MCF 10A (cell line): ENCODE measurements at regions of chr19 and their contacts with region 1.

Region 1: GRCh38 chr19:33998739-33999345 is 173.5 kb upstream of the LSM14A start:
- DNase-seq: peak; percentile 5
- H3K4me3 Mint-ChIP-seq: no peak overlapping the region
- H3K27ac Mint-ChIP-seq: no peak overlapping the region
- H3K4me1 Mint-ChIP-seq: no peaks in the 10 kb centered on the region
- H3K27me3 Mint-ChIP-seq: peaks cover 19% of the 10 kb centered on the region
- CTCF ChIP-seq: peak; percentile 28

Region 2: GRCh38 chr19:33795370-33796163 is 203.3 kb before region 1 on chr19:
- CTCF ChIA-PET with region 1: interaction called, 54 read pairs
- POLR2A ChIA-PET with region 1: interaction called, 7 read pairs
- intact Hi-C with region 1: no loop called
- DNase-seq: peak; percentile 89
- H3K4me3 Mint-ChIP-seq: peak overlapping the region; percentile 77
- H3K27ac Mint-ChIP-seq: peak overlapping the region; percentile 75
- H3K4me1 Mint-ChIP-seq: no peaks in the 10 kb centered on the region
- H3K27me3 Mint-ChIP-seq: no peaks in the 10 kb centered on the region
- CTCF ChIP-seq: peak; percentile 91

Region 3: DNA sequence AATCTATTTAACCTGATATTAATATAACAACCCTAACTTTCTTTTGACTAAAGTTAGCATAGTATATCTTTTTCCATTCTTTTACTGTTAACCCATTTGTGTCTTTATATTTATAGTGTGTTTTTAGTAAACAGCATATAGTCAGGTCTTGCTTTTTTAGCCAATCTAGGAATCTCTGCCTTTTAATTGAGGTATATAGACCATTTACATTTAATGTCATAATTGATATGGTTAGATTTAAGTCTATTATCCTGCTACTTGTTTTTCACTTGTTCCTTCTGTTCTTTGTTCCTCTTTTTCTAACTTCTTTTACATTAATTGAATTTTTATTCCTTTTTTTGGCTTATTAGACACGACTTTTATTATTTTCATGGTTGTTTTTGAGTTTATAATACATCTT is 27.8 kb before region 1 on chr19:
- CTCF ChIA-PET with region 1: interaction called, 12 read pairs
- POLR2A ChIA-PET with region 1: no interaction called
- intact Hi-C with region 1: no loop called
- DNase-seq: no peak
- H3K4me3 Mint-ChIP-seq: no peak overlapping the region
- H3K27ac Mint-ChIP-seq: no peak overlapping the region
- H3K4me1 Mint-ChIP-seq: no peaks in the 10 kb centered on the region
- H3K27me3 Mint-ChIP-seq: no peaks in the 10 kb centered on the region
- CTCF ChIP-seq: no peak

Region 4: DNA sequence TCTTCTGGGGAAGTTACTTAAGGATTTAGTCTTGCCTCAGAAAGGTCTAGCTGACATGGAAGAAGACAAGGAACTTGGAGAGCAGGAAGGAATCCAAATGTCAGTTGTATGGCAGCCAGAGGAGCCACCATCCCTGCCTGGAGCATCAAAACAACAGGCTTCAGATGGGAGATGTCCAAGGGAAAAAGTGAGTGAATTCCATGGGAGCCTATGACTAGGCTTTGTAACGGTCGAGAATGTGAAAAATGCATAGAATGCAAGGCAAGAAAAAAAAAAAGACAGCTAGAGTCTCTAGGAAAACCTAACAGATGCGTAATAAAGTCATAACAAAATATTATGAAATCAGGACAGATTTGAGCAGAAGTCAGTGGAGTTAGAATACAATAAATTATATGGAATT is 10.3 kb before region 1 on chr19:
- CTCF ChIA-PET with region 1: interaction called, 16 read pairs
- POLR2A ChIA-PET with region 1: interaction called, 3 read pairs
- intact Hi-C with region 1: no loop called
- DNase-seq: no peak
- H3K4me3 Mint-ChIP-seq: no peak overlapping the region
- H3K27ac Mint-ChIP-seq: no peak overlapping the region
- H3K4me1 Mint-ChIP-seq: no peaks in the 10 kb centered on the region
- H3K27me3 Mint-ChIP-seq: no peaks in the 10 kb centered on the region
- CTCF ChIP-seq: no peak

Region 5: DNA sequence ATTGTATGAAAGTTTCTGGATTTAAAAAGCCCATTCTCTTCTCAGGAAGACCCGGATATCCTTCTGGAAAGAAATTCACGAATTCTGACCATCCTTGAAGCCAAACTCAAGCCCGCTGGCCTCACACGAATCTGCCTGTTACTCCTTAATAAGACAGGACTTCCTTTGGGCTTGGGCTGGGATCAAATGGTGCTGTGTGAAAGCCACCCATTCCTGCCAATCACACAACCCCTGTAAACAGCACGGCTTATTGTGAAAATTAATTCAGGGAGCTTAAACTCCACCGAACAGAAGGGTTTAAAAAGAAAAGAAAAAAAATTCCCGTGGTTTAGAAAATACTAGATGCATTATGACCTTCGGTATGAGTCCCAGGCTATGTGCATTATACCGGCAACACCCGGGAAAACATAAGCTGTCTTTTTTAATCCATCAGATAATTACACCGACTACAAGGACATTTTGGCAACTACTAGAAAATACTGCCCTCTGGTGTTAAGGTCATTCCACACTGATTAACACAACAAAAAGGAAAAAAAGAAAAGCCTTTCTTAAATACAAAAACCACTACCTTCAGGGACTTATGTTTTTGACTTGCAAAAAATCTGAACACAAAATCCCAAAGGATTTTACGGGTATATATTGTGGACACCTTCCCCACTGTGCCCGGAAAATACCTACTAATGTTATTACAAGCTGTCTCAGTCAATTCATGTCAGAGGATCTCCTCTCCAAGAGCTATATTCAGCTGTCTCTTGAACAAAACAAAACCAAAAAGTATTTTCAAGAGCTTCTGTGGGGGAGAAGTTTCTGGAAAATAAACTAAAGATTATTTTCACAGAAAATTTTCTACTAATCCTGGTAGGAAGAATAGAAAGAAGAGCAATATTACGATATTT is 97.4 kb after region 1 on chr19:
- CTCF ChIA-PET with region 1: interaction called, 38 read pairs
- POLR2A ChIA-PET with region 1: no interaction called
- intact Hi-C with region 1: loop called (anchors 1 kb)
- DNase-seq: peak; percentile 69
- H3K4me3 Mint-ChIP-seq: no peak overlapping the region
- H3K27ac Mint-ChIP-seq: no peak overlapping the region
- H3K4me1 Mint-ChIP-seq: no peaks in the 10 kb centered on the region
- H3K27me3 Mint-ChIP-seq: peaks cover 28% of the 10 kb centered on the region
- CTCF ChIP-seq: peak; percentile 65